Activated CD4-positive, alpha-beta T cell treated with anti-CD3 and anti-CD28 coated beads for 36 hours (primary cell): ENCODE measurements at regions of chr16 and their contacts with region 1.

Region 1: DNA sequence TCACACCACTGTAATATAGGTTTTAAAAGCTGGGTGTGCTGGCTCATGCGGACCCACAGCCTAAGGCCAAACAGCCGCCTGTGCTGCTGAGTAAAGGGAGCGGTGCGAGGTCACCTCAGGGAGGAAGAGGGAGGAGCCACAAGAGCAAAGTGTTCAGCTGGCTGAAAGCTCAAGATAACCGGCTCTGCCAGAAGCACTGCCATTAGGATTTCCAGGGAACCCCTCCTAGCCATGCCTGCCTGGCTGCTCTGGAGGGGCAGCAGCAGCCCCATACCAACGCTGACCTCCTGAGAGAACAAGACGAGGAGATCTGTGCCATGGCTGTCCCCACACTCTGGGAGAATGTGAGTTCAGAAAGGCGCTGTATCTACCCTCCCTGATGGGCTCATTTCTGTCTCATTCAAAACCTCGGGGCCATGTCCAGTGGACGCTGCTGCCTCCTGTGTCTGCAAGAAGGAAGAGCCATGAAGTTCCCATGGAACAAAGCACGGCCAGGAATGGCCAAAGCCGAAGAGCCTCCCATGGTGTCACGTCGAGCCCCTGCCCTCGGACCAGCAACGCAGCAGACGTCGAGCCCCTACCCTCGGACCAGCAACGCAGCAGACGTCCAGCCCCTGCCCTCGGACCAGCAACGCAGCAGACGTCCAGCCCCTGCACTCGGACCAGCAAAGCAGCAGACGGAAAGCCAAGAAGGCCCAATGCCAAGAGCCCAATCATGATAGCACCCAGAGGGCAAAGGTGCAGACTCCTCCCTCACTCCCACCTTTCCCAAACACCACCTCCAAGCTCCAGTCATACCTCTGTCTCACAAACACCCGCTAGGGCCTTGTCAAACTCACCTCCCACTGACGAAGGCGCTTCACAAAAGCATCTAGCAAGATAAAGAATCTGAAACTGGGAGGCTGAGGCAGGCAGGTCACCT is 107.0 kb downstream of the ANKRD11 start:
- DNase-seq: peak; percentile 61
- ATAC-seq: peak; percentile 80
- H3K4me3 Mint-ChIP-seq: peak overlapping the region; percentile 3
- H3K27ac Mint-ChIP-seq: peak overlapping the region; percentile 56
- H3K4me1 Mint-ChIP-seq: peaks cover 90% of the 10 kb centered on the region
- H3K27me3 Mint-ChIP-seq: no peaks in the 10 kb centered on the region

Region 2: GRCh38 chr16:89219365-89219764 is 164.0 kb before region 1 on chr16:
- CTCF ChIA-PET with region 1: no interaction called
- POLR2A ChIA-PET with region 1: no interaction called
- intact Hi-C with region 1: no loop called
- DNase-seq: no peak
- ATAC-seq: no peak
- H3K4me3 Mint-ChIP-seq: peak overlapping the region; percentile 83
- H3K27ac Mint-ChIP-seq: no peak overlapping the region
- H3K4me1 Mint-ChIP-seq: peaks cover 19% of the 10 kb centered on the region
- H3K27me3 Mint-ChIP-seq: no peaks in the 10 kb centered on the region

Region 3: DNA sequence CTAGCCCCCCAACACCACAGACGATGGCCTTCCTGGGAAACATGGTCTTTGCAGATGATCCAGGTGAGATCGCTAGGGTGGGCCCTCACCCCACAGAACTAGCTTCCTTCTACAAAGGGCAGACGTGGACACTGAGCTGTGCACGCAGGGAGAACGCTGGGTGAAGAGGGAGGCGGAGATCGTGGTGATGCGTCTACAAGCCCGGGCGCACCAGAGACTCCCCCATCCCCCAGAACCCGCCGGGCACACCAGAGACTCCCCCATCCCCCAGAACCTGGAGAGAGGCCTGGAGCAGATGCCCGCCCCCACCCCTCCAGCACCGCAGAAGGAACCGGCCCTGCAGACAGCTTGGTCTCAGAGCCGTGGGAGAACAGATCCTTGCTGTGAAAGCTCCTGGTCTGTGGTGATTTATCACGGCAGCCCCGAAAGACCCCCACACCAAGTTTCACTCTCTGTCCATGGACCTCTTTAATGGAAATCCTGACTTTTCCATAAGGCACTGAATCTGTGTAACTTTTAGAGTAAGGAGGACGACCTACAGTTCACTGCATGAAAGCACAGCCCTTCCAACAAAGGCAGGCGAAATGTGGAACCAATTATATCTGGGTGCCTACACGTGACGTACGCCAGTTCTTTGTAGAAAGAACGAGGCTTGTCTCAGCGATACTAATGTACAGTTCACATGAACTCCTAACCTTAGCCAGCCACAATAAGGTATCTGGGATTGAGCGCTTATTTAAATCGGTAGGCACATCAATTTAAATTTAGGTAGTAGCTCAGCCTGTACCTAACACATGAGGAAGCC is 18.5 kb after region 1 on chr16:
- CTCF ChIA-PET with region 1: no interaction called
- POLR2A ChIA-PET with region 1: interaction called, 3 read pairs
- intact Hi-C with region 1: loop called in 1 of 2 experiments (anchors 1 kb)
- DNase-seq: no peak
- ATAC-seq: no peak
- H3K4me3 Mint-ChIP-seq: no peak overlapping the region
- H3K27ac Mint-ChIP-seq: peak overlapping the region; percentile 74
- H3K4me1 Mint-ChIP-seq: peaks cover 68% of the 10 kb centered on the region
- H3K27me3 Mint-ChIP-seq: no peaks in the 10 kb centered on the region

Region 4: DNA sequence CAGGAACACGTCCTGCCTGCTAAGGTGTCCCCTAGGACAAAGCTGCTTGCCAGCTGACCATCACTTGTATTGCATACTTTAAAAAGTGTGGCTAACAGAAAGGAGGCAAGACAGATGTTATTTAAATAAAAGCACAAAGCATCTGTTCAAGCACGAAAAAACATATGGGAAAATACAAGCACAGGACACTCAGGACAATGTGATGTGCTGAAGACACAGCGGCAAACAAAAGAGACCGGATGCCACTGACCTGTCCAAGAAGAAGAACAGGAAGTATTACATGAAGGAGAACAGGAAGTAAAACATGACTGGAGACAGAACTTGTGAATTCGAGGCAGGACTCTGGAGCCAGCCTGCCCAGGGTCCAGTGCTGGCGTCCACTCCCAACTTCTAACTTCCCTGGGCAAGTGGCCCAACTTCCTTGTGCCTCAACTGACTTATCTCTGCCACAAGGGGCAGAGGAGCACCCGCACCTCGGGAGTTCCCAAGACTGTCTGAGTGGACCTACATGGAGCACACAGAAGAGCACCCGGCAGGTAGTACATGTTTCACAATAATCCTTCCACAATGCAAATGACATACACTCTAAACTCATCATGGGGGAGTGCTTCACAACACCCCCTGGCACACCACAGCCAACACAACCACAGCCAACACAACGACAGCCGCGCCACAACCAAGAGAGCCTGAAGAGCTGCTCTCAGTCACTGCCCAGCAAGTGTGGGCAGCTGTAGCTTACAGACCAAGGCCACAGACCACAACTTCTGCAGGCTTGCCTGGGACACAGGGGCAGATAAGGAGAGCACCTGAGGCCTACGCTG is 70.4 kb after region 1 on chr16:
- CTCF ChIA-PET with region 1: no interaction called
- POLR2A ChIA-PET with region 1: no interaction called
- intact Hi-C with region 1: loop called in 1 of 2 experiments (anchors 2 kb)
- DNase-seq: no peak
- ATAC-seq: peak; percentile 40
- H3K4me3 Mint-ChIP-seq: no peak overlapping the region
- H3K27ac Mint-ChIP-seq: peak overlapping the region; percentile 22
- H3K4me1 Mint-ChIP-seq: peaks cover 80% of the 10 kb centered on the region
- H3K27me3 Mint-ChIP-seq: no peaks in the 10 kb centered on the region

Region 5: GRCh38 chr16:89534252-89534756 is 151.0 kb after region 1 on chr16:
- CTCF ChIA-PET with region 1: no interaction called
- POLR2A ChIA-PET with region 1: no interaction called
- intact Hi-C with region 1: no loop called
- DNase-seq: peak; percentile 50
- ATAC-seq: peak; percentile 90
- H3K4me3 Mint-ChIP-seq: no peak overlapping the region
- H3K27ac Mint-ChIP-seq: peak overlapping the region; percentile 79
- H3K4me1 Mint-ChIP-seq: peaks cover 23% of the 10 kb centered on the region
- H3K27me3 Mint-ChIP-seq: no peaks in the 10 kb centered on the region

Region 6: GRCh38 chr16:89581045-89581690 is 197.8 kb after region 1 on chr16:
- CTCF ChIA-PET with region 1: no interaction called
- POLR2A ChIA-PET with region 1: no interaction called
- intact Hi-C with region 1: no loop called
- DNase-seq: no peak
- ATAC-seq: no peak
- H3K4me3 Mint-ChIP-seq: no peak overlapping the region
- H3K27ac Mint-ChIP-seq: no peak overlapping the region
- H3K4me1 Mint-ChIP-seq: no peaks in the 10 kb centered on the region
- H3K27me3 Mint-ChIP-seq: no peaks in the 10 kb centered on the region